CD4-positive, alpha-beta T cell (primary cell): ENCODE measurements at regions of chr17 and their contacts with region 1.

Region 1: GRCh38 chr17:50200457-50201275 is 765 bp downstream of the COL1A1 start:
- DNase-seq: peak; percentile 68 to 89 (median 76)
- ATAC-seq: peak; percentile 64
- H3K4me3 ChIP-seq: peak overlapping the region; percentile 47
- H3K4me3 Mint-ChIP-seq: peak overlapping the region; percentile 80
- H3K27ac ChIP-seq: no peak overlapping the region
- H3K27ac Mint-ChIP-seq: peak overlapping the region; percentile 85
- H3K4me1 ChIP-seq: peaks cover 23% of the 10 kb centered on the region
- H3K4me1 Mint-ChIP-seq: peaks cover 27% of the 10 kb centered on the region
- H3K27me3 ChIP-seq: peaks cover 34 to 48% of the 10 kb centered on the region in 2 experiments
- H3K27me3 Mint-ChIP-seq: peaks cover 68% of the 10 kb centered on the region
- CTCF ChIP-seq: peak; percentile 100

Region 2: DNA sequence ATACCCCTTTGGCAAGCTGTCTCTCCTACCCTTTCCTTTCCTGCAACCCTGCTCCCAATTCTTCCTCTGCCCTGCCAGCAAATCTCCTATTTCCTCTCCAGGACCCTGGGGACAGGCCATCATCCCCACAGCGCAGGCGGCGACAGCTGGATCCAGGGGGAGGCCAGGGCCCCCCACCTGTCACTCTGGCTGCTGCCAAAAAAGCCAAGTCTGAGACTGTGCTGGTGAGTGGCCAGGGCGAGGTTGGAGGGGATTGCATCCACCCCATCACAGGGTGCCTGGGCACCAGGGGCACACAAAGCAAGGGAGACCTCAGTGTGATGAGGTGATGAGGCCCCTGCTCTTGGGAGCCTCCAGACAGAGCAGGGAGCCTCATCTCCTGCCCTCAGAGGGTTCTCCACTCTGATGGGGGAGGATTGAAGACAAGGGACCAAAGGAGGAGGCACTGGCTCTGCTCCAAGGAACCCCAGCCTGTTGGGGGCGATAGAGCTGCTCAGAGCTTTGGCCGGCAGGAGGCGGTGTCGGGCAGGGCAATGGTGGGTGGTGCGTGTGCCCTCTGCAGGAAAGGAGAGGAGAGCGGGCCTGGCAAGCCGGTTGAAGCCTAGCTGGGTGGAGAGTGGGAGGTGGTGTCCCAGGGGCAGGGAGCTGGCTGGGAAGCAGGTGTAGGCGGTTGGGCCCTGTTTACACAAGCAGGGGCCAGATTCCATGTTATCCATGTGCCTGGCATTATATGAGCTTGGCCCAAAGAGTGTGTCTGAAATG is 121.2 kb before region 1 on chr17:
- CTCF ChIA-PET with region 1: no interaction called
- POLR2A ChIA-PET with region 1: no interaction called
- intact Hi-C with region 1: no loop called
- DNase-seq: peak in 4 of 14 experiments; percentile 16 to 54 (median 26)
- ATAC-seq: no peak
- H3K4me3 ChIP-seq: no peak overlapping the region
- H3K4me3 Mint-ChIP-seq: no peak overlapping the region
- H3K27ac ChIP-seq: no peak overlapping the region
- H3K27ac Mint-ChIP-seq: no peak overlapping the region
- H3K4me1 ChIP-seq: no peaks in the 10 kb centered on the region
- H3K4me1 Mint-ChIP-seq: no peaks in the 10 kb centered on the region
- H3K27me3 ChIP-seq: no peaks in the 10 kb centered on the region
- H3K27me3 Mint-ChIP-seq: no peaks in the 10 kb centered on the region
- CTCF ChIP-seq: no peak

Region 3: GRCh38 chr17:50129728-50130558 is 70.7 kb before region 1 on chr17 and contains the start of gene SAMD14:
- CTCF ChIA-PET with region 1: no interaction called
- POLR2A ChIA-PET with region 1: no interaction called
- intact Hi-C with region 1: no loop called
- DNase-seq: peak in 11 of 14 experiments; percentile 42 to 83 (median 55)
- ATAC-seq: peak; percentile 75
- H3K4me3 ChIP-seq: peak within 1 kb of the TSS; percentile 57
- H3K4me3 Mint-ChIP-seq: peak within 1 kb of the TSS; percentile 89
- H3K27ac ChIP-seq: no peak within 1 kb of the TSS
- H3K27ac Mint-ChIP-seq: peak within 1 kb of the TSS; percentile 81
- H3K4me1 ChIP-seq: peaks cover 35% of the 10 kb centered on the region
- H3K4me1 Mint-ChIP-seq: peaks cover 33% of the 10 kb centered on the region
- H3K27me3 ChIP-seq: peaks cover 10 to 13% of the 10 kb centered on the region in 2 experiments
- H3K27me3 Mint-ChIP-seq: peaks cover 27% of the 10 kb centered on the region
- CTCF ChIP-seq: no peak
- total RNA-seq, gene SAMD14: 0.33 to 0.53 TPM

Region 4: DNA sequence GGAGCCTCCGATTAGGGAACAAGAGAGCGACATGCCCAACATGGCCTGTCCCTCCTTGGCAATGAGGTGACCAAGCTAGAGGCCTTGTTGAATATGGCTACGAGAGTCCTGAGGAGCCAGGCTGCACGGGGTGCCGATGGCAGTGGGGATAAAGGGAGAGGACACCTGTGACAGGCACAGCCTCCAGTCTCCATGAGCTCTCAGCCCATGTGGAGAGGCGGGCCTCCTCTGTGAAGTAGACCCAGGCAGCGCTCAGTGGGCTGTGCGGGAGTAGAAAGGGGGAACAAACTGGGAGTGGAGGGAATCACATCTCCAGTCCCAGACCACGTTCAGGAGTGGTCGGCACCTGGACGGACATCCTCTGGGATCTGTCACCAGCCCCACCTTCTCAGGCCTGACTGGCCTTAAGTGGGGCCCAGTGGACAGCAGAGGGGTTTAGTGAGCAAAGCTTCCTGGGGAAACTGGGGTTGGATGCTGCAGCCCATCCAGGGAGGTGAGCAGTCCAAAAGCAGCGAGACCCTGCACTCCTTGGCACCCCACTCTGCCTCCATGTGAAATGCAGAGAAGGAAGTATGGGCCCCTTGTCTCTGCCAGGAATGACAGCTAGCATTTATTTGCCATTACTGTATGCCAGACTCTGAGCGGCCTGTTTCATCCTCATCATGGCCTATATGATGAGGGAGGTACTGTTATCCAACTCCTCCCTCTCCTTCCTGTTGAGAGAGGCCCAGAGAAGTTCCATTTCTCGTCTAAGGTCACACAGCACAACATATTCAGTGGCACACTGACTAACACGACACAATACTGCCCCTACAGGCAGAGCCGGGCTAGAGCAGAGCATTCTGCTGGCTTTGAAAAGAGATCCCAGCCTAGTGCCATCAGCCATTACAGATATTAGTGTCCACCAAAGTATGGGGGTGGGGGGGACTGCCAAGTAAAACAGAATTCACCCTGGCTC is 69.1 kb after region 1 on chr17:
- CTCF ChIA-PET with region 1: interaction called, 31 read pairs
- POLR2A ChIA-PET with region 1: no interaction called
- intact Hi-C with region 1: loop called (anchors 1 kb)
- DNase-seq: peak; percentile 30 to 73 (median 45)
- ATAC-seq: peak; percentile 83
- H3K4me3 ChIP-seq: no peak overlapping the region
- H3K4me3 Mint-ChIP-seq: no peak overlapping the region
- H3K27ac ChIP-seq: no peak overlapping the region
- H3K27ac Mint-ChIP-seq: no peak overlapping the region
- H3K4me1 ChIP-seq: peaks cover 13% of the 10 kb centered on the region
- H3K4me1 Mint-ChIP-seq: peaks cover 6% of the 10 kb centered on the region
- H3K27me3 ChIP-seq: peaks cover 17 to 20% of the 10 kb centered on the region in 2 experiments
- H3K27me3 Mint-ChIP-seq: peaks cover 23% of the 10 kb centered on the region
- CTCF ChIP-seq: peak; percentile 68

Region 5: DNA sequence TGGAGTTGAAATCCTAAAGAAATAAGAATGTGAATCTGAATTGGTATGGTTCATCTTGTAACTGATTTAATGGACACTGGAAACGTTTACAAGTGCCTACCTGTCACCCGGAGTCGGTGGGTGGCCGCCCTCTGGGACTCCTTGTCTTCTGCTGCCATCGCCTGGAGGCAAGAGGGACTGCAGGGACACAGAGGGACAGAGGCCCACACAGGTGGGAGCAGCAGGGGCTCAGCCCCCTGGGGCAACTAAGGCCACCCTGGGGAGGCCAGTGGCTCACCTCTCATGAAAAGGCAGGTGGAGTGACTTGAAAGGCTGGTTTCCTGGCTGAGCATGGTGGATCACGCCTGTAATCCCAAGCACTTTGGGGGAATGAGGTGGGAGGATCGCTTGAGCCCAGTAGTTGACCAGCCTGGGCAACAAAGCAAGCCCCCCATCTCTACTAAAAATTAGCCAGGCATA is 96.8 kb after region 1 on chr17:
- CTCF ChIA-PET with region 1: interaction called, 31 read pairs
- POLR2A ChIA-PET with region 1: no interaction called
- intact Hi-C with region 1: loop called (anchors 1 kb)
- DNase-seq: peak; percentile 67 to 85 (median 72)
- ATAC-seq: peak; percentile 100
- H3K4me3 ChIP-seq: no peak overlapping the region
- H3K4me3 Mint-ChIP-seq: no peak overlapping the region
- H3K27ac ChIP-seq: no peak overlapping the region
- H3K27ac Mint-ChIP-seq: no peak overlapping the region
- H3K4me1 ChIP-seq: no peaks in the 10 kb centered on the region
- H3K4me1 Mint-ChIP-seq: no peaks in the 10 kb centered on the region
- H3K27me3 ChIP-seq: peaks cover 0 to 3% of the 10 kb centered on the region in 2 experiments
- H3K27me3 Mint-ChIP-seq: peaks cover 16% of the 10 kb centered on the region
- CTCF ChIP-seq: peak; percentile 84